Panc1 (cell line): ENCODE measurements at regions of chr2 and their contacts with region 1.

Region 1: GRCh38 chr2:38057651-38058410 is 18.1 kb downstream of the CYP1B1 start:
- DNase-seq: no peak
- ATAC-seq: peak; percentile 35; the same call in 1 of the 2 replicates
- H3K4me3 ChIP-seq: no peak overlapping the region
- H3K27ac ChIP-seq: no peak overlapping the region
- H3K4me1 ChIP-seq: no peaks in the 10 kb centered on the region
- H3K27me3 ChIP-seq: no peaks in the 10 kb centered on the region
- CTCF ChIP-seq: no peak

Region 2: DNA sequence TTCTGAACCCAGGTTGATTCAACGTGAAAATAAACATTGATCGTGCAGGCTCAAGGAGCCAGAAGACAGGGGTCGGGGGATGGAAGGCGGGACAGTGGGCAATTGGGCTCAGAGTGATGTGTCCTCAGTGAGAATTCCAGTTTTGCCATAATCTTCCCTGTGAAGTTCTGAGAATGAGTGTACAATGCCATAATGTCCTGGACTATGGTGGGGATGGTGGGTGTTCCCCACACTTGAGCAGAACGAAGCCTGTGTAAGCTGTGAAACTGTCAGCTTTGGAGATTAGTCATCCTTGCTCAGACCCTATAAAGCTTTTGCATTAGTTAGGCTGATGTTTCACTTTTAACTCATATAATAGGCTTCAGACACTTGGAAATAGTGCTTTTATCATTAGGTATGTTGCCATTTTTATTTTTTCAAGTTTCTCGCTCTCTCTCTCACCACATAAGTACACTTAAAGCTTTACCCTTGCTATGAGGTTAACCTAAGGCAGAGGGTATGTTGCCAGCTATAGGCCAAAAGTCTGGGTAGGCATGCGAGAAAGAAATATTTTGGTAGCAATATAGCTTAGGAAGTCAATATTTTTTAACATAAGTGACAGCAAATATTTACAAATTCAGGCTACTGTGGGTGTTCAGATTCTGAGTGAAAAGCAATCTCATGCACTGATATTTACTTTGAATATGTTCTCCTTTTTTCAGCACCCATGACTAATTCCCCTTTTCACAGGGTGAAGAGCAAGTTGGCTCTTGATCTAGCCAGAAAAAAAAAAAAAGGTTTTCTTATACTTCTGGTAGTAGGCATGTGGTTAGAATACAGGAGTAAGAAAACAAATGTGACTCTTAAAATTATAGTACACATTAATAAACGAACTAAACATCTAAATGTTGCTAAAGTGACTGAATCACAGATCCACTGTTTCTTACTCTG is 433.6 kb before region 1 on chr2:
- CTCF ChIA-PET with region 1: no interaction called
- POLR2A ChIA-PET with region 1: no interaction called
- in situ Hi-C with region 1: no loop called
- intact Hi-C with region 1: loop called (anchors 10 kb)
- DNase-seq: no peak
- ATAC-seq: no peak
- H3K4me3 ChIP-seq: no peak overlapping the region
- H3K27ac ChIP-seq: no peak overlapping the region
- H3K4me1 ChIP-seq: no peaks in the 10 kb centered on the region
- H3K27me3 ChIP-seq: peaks cover 2% of the 10 kb centered on the region; the same call in 1 of the 2 replicates
- CTCF ChIP-seq: no peak